Calu3 (cell line): ENCODE measurements at regions of chr7 and their contacts with region 1.

Region 1: GRCh38 chr7:92833024-92833765 is 3.2 kb downstream of the CDK6 start:
- DNase-seq: peak; percentile 88
- H3K4me3 Mint-ChIP-seq: peak overlapping the region; percentile 79
- H3K27ac Mint-ChIP-seq: peak overlapping the region; percentile 90
- H3K4me1 Mint-ChIP-seq: no peaks in the 10 kb centered on the region
- H3K27me3 Mint-ChIP-seq: no peaks in the 10 kb centered on the region
- CTCF ChIP-seq: peak; percentile 74

Region 2: GRCh38 chr7:92528188-92528957 is 304.8 kb before region 1 on chr7 and contains the starts of genes PEX1 and RBM48:
- CTCF ChIA-PET with region 1: interaction called, 4 read pairs
- intact Hi-C with region 1: loop called (anchors 10 kb)
- DNase-seq: peak; percentile 88
- H3K4me3 Mint-ChIP-seq: peak within 1 kb of the TSS; percentile 85
- H3K27ac Mint-ChIP-seq: peak within 1 kb of the TSS; percentile 99
- H3K4me1 Mint-ChIP-seq: peaks cover 14% of the 10 kb centered on the region
- H3K27me3 Mint-ChIP-seq: no peaks in the 10 kb centered on the region
- CTCF ChIP-seq: no peak
- total RNA-seq, gene PEX1: 10.1 and 10.4 TPM in 2 replicates
- total RNA-seq, gene RBM48: 8.2 and 10.9 TPM in 2 replicates

Region 3: DNA sequence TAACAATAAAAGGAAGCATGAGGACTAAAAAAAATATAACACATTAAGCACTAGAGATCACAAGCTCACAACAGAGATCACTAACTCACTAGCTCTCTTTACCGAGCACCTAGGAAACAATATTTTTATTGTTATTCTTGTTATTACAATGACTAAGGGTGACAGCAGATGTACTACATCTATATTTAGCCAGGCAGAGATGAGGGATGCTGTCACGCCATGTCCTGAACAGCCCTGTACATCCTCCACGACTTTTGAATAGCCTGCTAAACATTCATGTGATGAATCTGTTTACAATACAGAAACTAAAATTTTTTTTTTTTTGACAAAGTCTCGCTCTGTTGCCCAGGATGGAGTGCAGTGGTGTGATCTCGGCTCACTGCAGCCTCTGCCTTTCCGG is 265.7 kb before region 1 on chr7:
- CTCF ChIA-PET with region 1: no interaction called
- intact Hi-C with region 1: no loop called
- DNase-seq: no peak
- H3K4me3 Mint-ChIP-seq: no peak overlapping the region
- H3K27ac Mint-ChIP-seq: no peak overlapping the region
- H3K4me1 Mint-ChIP-seq: no peaks in the 10 kb centered on the region
- H3K27me3 Mint-ChIP-seq: no peaks in the 10 kb centered on the region
- CTCF ChIP-seq: no peak

Region 4: DNA sequence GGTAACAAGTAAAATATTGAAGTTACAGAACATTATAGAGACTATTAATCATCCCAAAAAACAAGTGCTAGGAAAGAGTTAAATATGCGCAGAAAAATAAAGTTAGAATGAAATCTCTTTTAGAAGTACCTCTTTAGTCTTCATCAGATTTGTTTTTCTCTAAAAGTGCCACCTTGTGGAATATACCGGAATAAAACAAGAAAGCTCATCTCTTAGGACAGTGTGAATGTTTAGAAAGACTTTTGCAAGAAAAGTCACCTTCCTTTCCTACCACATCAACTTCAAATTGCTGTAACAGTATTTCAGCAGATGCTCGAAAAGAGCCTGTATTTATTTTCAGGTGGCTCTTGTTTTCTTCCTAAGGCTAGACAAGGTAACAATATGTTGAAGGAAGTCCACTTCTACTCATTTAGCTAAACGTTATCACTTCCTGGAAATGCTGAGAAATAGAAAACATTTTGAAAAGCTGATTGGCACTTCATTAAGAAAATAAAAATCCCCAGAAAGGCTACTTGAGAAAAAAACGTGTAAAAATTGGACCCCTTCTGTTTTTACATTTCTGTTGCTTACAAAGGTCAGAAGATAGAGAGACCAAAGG is 223.2 kb before region 1 on chr7:
- CTCF ChIA-PET with region 1: interaction called, 10 read pairs
- intact Hi-C with region 1: no loop called
- DNase-seq: no peak
- H3K4me3 Mint-ChIP-seq: no peak overlapping the region
- H3K27ac Mint-ChIP-seq: no peak overlapping the region
- H3K4me1 Mint-ChIP-seq: peaks cover 8% of the 10 kb centered on the region
- H3K27me3 Mint-ChIP-seq: no peaks in the 10 kb centered on the region
- CTCF ChIP-seq: no peak

Region 5: GRCh38 chr7:92621026-92621540 is 212.1 kb before region 1 on chr7:
- CTCF ChIA-PET with region 1: interaction called, 11 read pairs
- intact Hi-C with region 1: loop called (anchors 2 kb)
- DNase-seq: peak; percentile 69
- H3K4me3 Mint-ChIP-seq: no peak overlapping the region
- H3K27ac Mint-ChIP-seq: no peak overlapping the region
- H3K4me1 Mint-ChIP-seq: peaks cover 28% of the 10 kb centered on the region
- H3K27me3 Mint-ChIP-seq: no peaks in the 10 kb centered on the region
- CTCF ChIP-seq: peak; percentile 30

Region 6: GRCh38 chr7:92698237-92698841 is 134.9 kb before region 1 on chr7:
- CTCF ChIA-PET with region 1: interaction called, 8 read pairs
- intact Hi-C with region 1: loop called (anchors 2 kb)
- DNase-seq: peak; percentile 74
- H3K4me3 Mint-ChIP-seq: peak overlapping the region; percentile 54
- H3K27ac Mint-ChIP-seq: peak overlapping the region; percentile 94
- H3K4me1 Mint-ChIP-seq: peaks cover 56% of the 10 kb centered on the region
- H3K27me3 Mint-ChIP-seq: no peaks in the 10 kb centered on the region
- CTCF ChIP-seq: no peak

Region 7: GRCh38 chr7:92988051-92988450 is 154.9 kb after region 1 on chr7:
- CTCF ChIA-PET with region 1: interaction called, 9 read pairs
- intact Hi-C with region 1: loop called (anchors 5 kb)
- DNase-seq: peak; percentile 6
- H3K4me3 Mint-ChIP-seq: no peak overlapping the region
- H3K27ac Mint-ChIP-seq: no peak overlapping the region
- H3K4me1 Mint-ChIP-seq: no peaks in the 10 kb centered on the region
- H3K27me3 Mint-ChIP-seq: no peaks in the 10 kb centered on the region
- CTCF ChIP-seq: no peak

Region 8: DNA sequence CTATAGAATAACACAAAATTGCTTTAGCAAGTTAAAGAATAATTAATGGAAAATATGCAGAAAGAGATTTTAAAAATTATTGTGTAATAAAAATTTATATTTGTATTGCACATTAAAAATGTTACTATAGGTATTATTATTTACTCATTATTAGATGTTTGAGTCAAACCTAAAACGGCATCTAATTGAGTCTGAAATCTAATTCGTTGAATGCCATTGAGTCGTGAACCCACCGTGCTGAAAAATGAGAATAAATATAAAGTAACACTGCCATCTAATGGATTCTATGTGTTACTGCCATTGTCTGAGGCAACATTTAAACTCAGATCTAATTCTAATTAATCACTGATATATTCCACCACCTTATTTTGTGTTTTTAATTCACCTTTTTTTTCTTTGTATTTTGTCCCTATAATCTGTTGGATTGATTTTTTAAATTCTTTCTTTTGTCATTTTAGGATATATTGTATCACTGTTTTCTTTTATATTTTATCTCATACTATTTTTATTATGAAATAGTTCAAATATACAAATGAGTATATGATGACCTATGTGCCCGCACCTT is 222.4 kb after region 1 on chr7:
- CTCF ChIA-PET with region 1: no interaction called
- intact Hi-C with region 1: loop called (anchors 5 kb)
- DNase-seq: no peak
- H3K4me3 Mint-ChIP-seq: no peak overlapping the region
- H3K27ac Mint-ChIP-seq: no peak overlapping the region
- H3K4me1 Mint-ChIP-seq: peaks cover 9% of the 10 kb centered on the region
- H3K27me3 Mint-ChIP-seq: no peaks in the 10 kb centered on the region
- CTCF ChIP-seq: no peak